ENCODE measurements at regions of chrX and their contacts with region 1.

Region 1: DNA sequence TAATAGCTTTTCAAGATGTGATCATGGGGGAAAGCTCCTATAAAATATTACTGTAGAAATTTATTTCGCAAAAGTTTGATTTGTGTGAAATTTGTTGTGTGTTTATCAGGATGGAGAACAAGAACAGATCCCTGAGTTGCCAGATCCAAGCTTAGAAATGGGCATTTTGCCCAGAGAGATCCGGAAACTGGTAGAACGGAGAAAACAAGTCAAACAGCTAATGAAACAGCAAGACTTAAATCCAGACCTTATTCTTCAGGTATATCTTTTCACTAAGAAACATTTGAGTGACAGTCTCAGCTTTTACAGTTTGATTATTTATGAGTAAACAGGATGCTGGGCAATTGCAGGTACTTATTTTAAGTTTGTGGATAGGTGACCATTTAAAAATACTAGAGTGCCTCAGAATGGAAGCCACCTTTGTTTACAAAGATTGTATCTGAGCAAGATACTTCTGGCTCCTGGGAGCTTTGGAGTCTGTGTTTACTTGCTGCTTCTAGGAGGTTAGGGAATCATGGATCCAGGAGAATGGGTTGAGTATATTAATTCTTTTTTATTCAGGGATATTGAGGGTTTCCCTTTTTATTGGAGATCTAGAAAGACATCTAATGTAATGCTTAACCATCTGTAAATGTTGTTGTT is 54.6 kb downstream of the POLA1 start:
- DNase-seq: no peak
- H3K4me3 ChIP-seq: no peak overlapping the region
- H3K27ac ChIP-seq: no peak overlapping the region
- H3K27me3 ChIP-seq: no peaks in the 10 kb centered on the region
- CTCF ChIP-seq: no peak

Region 2: DNA sequence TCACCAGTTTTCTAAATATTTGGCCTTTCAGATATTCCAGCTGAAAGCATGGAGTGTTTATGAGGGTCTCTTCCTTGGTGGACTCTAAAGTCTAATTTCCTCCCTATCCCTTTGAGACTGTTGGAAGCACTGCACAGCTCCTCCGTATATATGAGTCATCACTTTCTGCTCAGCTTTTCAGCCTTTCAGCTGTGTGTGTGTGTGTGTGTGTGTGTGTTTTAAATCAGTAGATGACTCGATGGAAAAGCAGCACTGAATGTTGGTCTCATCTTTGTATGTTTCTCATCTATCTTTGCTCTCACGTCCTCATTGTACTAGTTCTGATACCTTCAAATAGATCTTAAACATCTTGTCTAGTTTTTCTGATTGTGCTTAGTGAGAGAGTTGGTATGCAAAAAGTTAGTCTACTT is 517.2 kb before region 1 on chrX:
- CTCF ChIA-PET with region 1: no interaction called
- POLR2A ChIA-PET with region 1: no interaction called
- DNase-seq: peak; percentile 37
- H3K4me3 ChIP-seq: no peak overlapping the region; the same call in 1 of the 2 replicates
- H3K27ac ChIP-seq: no peak overlapping the region
- H3K27me3 ChIP-seq: no peaks in the 10 kb centered on the region
- CTCF ChIP-seq: no peak

Region 3: DNA sequence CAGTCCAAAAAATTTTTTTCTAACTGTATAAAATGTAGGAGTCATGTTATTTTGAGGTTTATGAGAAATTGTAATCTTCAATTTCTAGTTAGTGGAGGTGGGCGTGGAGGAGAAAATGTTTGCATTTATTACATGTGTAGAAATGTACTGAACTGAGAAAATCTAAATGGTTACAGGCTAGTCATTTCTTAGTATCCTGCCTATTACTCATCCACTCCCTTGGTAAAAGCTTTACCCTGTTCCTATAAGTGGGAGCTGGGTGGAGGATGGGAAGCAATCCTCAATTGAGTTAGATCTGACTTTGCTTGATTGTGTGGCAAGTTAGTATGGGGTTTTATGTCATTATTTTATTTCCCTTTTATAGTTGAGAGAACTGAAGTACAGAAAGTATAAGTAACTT is 19.2 kb after region 1 on chrX:
- CTCF ChIA-PET with region 1: interaction called, 21 read pairs
- POLR2A ChIA-PET with region 1: no interaction called
- DNase-seq: no peak
- H3K4me3 ChIP-seq: no peak overlapping the region
- H3K27ac ChIP-seq: no peak overlapping the region
- H3K27me3 ChIP-seq: no peaks in the 10 kb centered on the region
- CTCF ChIP-seq: no peak

Region 4: DNA sequence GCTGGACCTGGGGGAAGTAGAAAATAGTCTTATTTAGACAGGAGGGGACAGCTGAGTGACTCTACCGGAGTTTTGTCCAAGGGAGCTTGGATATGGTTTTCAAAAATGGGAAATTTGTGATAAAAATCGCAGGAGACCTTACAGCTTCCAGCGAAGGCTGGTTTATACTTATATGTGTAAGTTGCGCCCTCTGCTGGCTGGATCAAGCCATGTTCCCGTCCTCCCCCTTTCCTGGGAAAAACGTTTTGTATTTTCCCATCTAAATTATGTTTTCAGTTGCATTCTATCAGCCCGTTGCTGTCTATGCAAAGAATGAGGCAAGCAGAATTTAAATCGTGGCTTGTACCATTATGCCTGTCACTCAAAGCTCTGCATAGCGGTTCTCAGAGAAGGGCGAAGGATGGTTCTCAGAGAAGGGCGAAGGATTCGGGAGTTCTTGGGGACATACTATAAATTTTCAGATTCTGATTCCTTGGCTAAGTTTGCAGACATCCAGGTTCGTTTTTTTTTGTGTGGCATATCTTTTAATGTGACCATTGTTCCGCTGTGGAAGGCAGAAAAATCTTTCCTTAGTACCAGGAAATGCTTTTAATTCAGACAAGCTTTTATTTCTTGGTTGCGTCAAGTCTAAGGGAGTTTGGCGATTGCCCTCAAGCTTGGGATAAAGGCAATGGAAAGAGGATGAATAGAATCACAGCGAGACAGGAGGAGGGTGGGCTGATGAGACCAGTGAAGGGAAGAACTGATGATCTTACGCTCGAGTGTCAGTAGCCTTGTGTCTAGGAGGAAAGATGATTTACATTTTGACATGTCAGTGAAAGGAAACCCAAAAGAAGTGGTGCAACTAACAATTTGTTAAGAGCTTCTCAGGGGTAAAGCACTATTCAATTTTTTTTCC is 396.0 kb after region 1 on chrX:
- CTCF ChIA-PET with region 1: interaction called, 80 read pairs
- POLR2A ChIA-PET with region 1: no interaction called
- DNase-seq: peak; percentile 10
- H3K4me3 ChIP-seq: no peak overlapping the region
- H3K27ac ChIP-seq: no peak overlapping the region
- H3K27me3 ChIP-seq: no peaks in the 10 kb centered on the region
- CTCF ChIP-seq: peak; percentile 68

Measured in AG04450 (cell line).